Prostate gland (tissue), 2 donors: ENCODE measurements at regions of chr1 and their contacts with region 1.

Region 1: DNA sequence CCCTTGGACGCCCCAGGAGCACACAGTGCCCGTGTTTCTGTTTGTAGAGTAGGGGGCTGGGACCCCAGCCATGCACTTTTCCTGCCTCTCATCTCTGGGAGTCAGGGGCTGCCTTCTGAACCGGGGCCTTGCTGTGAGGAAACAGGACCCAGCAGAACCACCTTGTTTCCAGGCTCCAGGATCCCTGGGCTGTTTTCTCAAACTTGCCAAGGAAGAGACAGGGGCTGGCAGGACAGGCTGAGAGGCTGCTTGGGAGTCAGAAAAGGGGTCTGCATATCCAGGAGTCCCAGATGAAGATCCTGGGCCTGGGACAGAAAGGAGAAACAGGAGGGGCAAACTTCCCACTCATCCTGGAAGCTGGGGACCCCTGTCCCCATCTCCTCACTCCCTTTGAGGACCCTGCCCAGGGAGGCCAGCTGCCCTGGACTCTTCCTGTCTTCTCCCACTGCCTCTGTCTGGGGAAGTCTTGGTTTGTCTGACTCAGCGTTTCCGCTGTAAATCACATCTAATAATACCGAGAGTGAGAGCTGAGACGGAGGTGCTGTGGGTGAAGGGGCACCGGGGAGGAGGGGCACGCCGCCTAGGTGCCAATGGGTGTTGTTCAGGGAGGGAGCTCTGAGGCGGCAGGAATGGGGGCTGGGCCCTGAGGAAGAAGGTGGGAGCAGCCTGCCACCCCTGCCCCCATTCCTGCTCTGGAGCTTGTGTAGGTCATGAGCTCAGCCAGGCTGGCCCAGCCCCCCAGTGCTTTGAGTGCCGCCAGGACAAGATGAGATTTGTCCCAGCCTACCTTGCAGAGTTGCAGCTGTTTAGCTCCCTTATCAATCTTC is 16.7 kb downstream of the POU3F1 start:
- DNase-seq: no peak
- H3K4me3 ChIP-seq: no peak overlapping the region
- H3K27ac ChIP-seq: no peak overlapping the region
- H3K4me1 ChIP-seq: no peaks in the 10 kb centered on the region
- H3K27me3 ChIP-seq: no peaks in the 10 kb centered on the region
- CTCF ChIP-seq: no peak
- POLR2A ChIP-seq: no peak

Region 2: DNA sequence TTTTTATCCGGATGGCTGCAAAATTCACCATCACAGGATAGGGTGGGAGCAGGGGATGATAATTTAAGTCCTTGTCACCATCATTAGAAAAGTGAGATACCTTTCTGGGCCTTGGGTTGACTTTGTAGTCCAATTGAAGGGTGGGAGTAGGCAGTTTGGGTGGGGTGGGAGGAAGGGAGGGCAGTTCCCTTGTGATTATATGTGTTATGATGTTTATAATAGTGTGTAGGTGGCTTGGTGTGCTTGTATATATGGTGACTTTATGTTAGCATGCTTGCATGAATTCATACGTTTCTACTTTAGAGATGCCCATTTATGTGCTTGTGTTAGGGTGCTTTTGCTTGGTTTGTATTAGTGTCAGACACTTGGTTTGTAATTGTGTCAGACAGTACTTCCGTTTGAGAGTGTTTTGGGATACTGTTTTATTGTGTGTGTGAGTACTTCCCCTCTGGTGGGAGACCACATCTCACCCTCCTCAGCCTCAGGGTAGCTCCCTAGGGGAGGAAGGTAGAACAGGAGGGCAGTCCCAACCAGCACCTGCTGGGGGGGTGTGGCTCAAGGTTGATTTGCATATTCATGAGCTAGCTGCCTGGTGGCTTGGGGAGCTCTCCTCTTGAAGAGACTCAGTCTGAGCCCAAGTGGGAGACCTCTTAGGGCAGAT is 23.0 kb after region 1 on chr1:
- intact Hi-C with region 1: no loop called
- DNase-seq: no peak
- H3K4me3 ChIP-seq: no peak overlapping the region
- H3K27ac ChIP-seq: no peak overlapping the region
- H3K4me1 ChIP-seq: no peaks in the 10 kb centered on the region
- H3K27me3 ChIP-seq: peaks cover 7% of the 10 kb centered on the region
- CTCF ChIP-seq: no peak
- POLR2A ChIP-seq: no peak

Region 3: DNA sequence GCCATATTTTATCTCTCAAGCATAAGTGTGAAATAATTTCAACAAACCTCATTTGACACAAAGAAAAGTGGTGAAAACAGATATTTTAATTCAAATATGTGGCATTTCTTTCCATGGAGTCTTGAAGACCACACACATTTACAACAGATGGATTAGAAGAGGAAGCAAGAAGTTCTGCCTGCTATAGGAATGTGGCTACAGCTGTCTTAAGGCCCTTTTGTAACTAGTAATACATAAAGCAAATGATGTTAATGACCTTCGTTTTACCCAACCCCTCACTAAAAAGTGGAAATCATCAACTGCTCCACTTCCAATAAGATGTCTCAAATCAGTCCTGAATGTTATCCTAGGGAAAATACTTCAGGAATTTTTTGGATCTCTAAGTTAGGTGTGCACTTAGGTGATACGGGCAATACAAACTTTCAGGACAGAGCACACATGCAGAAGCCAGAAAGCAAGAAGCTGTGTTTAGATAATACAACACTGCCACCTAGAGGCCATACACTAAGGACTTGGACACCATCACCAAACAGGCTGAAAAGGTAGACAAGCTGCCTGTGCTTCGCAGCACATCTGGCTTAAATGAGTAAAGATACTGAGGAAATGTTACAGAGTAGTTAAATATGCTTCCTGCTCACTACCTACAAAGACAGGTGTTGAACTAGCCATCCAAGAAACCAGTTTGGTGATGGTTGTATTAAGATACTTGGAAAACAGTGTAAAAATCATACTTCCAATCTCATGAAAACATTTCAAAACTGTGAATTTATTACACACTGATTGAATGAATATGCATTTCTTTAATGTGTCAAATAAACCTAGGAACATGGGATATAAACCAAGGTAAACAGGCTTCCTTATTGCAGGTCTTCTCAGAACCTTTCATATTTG is 805.3 kb after region 1 on chr1:
- intact Hi-C with region 1: loop called (anchors 10 kb)
- DNase-seq: peak; percentile 77
- H3K4me3 ChIP-seq: no peak overlapping the region
- H3K27ac ChIP-seq: no peak overlapping the region
- H3K4me1 ChIP-seq: no peaks in the 10 kb centered on the region
- H3K27me3 ChIP-seq: no peaks in the 10 kb centered on the region
- CTCF ChIP-seq: peak; percentile 61 to 88 (median 82)
- POLR2A ChIP-seq: no peak